Left lung (tissue), 14 donors: ENCODE measurements at regions of chr11 and their contacts with region 1.

Region 1: GRCh38 chr11:5123802-5124521 is 14.2 kb downstream of the OR52A5 start:
- DNase-seq: peak in 2 of 4 donors; percentile 36 to 73
- ATAC-seq: peak; percentile 95
- H3K4me3 ChIP-seq: no peak overlapping the region
- H3K27ac ChIP-seq: no peak overlapping the region
- H3K4me1 ChIP-seq: no peaks in the 10 kb centered on the region
- H3K27me3 ChIP-seq: no peaks in the 10 kb centered on the region
- CTCF ChIP-seq: peak; percentile 75 to 86

Region 2: DNA sequence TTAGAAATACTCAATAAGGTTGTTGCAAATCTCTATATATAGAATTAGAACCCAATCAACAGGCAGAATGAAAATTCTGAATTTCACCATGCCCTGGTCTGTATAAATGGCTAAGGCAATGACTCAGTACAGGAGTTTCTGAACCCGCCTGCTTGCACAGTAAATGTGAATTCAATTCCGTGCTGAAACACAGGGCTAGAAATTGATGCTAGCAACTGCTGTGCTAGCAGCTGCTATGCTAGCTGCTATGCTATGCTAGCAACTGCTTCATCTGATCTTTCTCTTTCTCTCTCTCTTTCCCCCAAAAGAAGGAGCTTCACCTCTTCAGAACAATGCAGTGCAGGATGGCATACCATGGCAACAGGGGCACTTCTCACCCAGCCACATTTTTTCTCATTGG is 87.3 kb before region 1 on chr11:
- intact Hi-C with region 1: no loop called
- DNase-seq: no peak
- ATAC-seq: no peak
- H3K4me3 ChIP-seq: no peak overlapping the region
- H3K27ac ChIP-seq: no peak overlapping the region
- H3K4me1 ChIP-seq: no peaks in the 10 kb centered on the region
- H3K27me3 ChIP-seq: no peaks in the 10 kb centered on the region
- CTCF ChIP-seq: no peak

Region 3: GRCh38 chr11:5380740-5381342 is 256.9 kb after region 1 on chr11:
- intact Hi-C with region 1: loop called in 1 of 2 experiments (anchors 5 kb)
- DNase-seq: peak in 3 of 4 donors; percentile 12 to 55 (median 33)
- ATAC-seq: peak; percentile 88
- H3K4me3 ChIP-seq: no peak overlapping the region
- H3K27ac ChIP-seq: no peak overlapping the region
- H3K4me1 ChIP-seq: no peaks in the 10 kb centered on the region
- H3K27me3 ChIP-seq: no peaks in the 10 kb centered on the region
- CTCF ChIP-seq: peak; percentile 58 to 73